ENCODE measurements at regions of chr1 and their contacts with region 1.

Region 1: DNA sequence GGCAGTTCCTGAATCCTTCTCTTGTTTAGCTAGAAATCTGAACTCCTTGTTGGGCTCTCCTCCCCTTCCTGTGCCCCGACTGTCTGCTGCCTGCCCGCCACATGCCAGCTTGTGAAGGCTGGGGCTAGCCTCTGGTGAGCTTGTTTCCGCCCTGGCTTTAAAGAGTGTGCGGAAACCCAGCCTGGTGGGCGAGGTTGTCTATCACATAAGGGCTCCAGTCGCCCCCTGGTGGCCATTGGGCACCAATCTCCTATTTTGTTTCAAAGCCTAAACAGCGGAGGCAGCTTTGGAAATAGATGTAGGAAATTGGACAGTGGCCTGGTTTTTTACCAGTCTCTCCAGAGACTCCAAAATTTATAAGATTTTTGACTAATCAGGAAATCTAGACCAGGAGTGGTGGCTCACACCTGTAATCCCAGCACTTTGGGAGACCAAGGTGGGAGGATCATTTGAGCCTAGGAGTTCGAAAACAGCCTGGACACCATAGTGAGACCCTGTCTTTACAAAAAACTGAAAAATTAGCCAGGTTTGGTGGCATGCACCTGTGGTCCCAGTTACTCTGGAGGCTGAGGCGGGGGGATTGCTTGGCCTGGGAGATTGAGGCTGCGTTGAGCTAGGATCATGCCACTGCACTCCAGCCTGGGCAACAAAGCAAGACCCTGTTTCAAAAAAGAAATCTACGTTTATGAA is 9.8 kb downstream of the ATP8B2 start:
- DNase-seq: peak; percentile 89

Region 2: DNA sequence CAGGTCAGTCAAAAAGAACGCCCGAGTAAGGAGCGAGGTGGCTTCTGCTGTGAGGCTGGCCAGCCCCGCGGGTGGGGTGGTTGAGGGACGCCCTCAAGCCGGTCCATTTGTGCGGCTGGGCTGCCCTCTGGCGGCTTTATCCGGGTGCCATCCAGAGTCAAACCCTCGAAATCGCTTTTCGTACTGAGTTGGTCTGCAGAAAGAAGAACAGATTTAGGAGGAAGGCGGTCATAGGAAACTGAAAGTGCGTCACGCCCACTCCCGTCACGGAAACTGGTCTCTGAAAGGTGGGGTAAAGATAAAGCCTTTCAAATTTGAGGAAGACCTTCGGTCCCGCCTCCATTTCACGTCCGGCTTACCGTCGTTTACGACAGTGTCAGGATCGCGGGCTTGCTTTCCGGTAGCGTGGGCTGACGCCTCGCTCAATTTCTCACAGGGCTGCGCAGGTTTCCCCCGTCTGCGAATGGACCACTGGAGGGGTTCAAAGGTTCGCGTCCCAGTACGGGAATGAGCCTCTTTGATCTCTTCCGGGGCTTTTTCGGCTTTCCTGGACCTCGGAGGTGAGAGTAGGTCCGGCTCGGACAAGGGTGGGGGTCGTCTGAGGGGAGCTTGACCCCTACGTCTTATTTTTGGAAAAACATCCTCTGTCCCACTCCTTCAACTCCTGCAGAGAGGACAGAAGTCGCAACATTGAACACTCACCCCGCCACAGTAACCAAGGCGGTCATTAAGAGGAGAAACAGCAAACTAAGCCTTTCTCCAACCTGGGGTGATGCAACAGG is 62.8 kb before region 1 on chr1 and contains the start of gene HAX1:
- CTCF ChIA-PET with region 1: interaction called, 24 read pairs
- POLR2A ChIA-PET with region 1: no interaction called
- DNase-seq: peak; percentile 94

Region 3: GRCh38 chr1:154324669-154325582 is 10.2 kb before region 1 on chr1 and contains the start of gene ATP8B2:
- CTCF ChIA-PET with region 1: interaction called, 65 read pairs
- POLR2A ChIA-PET with region 1: interaction called, 24 read pairs
- DNase-seq: peak; percentile 95

Region 4: DNA sequence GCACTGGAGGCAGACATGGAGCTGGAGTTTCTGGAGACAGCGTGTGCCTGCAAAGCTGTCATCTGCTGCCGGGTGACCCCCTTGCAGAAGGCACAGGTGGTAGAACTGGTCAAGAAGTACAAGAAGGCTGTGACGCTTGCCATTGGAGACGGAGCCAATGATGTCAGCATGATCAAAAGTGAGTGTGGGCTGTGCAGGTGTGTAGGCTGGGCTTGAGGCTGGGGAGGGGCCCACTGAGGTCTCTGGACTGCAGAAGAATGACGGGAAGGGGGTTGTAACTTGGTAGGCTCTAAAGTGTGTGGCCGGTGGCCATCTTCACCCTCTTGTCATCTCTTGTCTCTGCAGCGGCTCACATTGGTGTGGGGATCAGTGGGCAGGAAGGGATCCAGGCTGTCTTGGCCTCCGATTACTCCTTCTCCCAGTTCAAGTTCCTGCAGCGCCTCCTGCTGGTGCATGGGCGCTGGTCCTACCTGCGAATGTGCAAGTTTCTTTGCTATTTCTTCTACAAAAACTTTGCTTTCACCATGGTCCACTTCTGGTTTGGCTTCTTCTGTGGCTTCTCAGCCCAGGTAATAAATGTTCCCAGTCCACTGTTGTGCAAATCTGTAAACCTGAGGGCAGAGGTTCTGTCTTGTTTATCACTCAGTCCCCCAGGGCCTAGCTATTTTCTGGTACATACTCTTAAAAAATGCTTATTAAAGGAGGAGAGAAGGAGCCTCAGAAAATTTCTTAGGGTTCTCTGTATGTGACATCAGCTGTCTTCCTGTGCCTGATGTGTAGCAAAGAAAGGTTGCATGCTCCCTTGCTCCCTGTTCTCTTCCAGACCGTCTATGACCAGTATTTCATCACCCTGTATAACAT is 10.0 kb after region 1 on chr1:
- CTCF ChIA-PET with region 1: interaction called, 27 read pairs
- POLR2A ChIA-PET with region 1: no interaction called
- DNase-seq: peak; percentile 75

Measured in HEK293T (cell line).